Aorta (tissue), 5 donors: ENCODE measurements at regions of chr2 and their contacts with region 1.

Region 1: DNA sequence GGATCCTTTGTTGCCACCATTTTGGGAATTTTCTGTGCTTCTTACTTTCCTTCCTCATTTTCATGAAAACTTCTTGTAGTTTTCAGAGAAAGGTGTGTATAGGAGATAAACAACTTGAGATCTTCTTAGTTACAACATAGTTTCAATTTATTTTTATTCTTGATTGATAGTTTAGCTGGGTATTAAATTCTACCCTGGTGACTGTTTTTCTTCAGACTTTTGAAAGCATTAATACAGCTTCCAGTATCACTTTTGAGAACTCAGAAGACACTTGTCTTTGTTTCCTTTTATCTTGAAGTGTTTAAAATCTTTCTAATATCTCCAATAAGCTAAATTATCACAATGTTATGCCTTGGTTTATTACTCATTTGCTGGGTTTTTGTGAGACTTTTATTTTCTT is 167.5 kb upstream of the DPP10 start:
- DNase-seq: no peak
- ATAC-seq: no peak
- H3K4me3 ChIP-seq: no peak overlapping the region
- H3K27ac ChIP-seq: no peak overlapping the region
- H3K4me1 ChIP-seq: peaks cover 2% of the 10 kb centered on the region in 2 donors
- H3K27me3 ChIP-seq: no peaks in the 10 kb centered on the region

Region 2: GRCh38 chr2:114219456-114220014 is 55.4 kb before region 1 on chr2:
- intact Hi-C with region 1: loop called in 1 of 2 experiments (anchors 10 kb)
- DNase-seq: no peak
- ATAC-seq: no peak
- H3K4me3 ChIP-seq: no peak overlapping the region
- H3K27ac ChIP-seq: no peak overlapping the region
- H3K4me1 ChIP-seq: no peaks in the 10 kb centered on the region
- H3K27me3 ChIP-seq: no peaks in the 10 kb centered on the region